Caco-2 (cell line): ENCODE measurements at regions of chr19 and their contacts with region 1.

Region 1: DNA sequence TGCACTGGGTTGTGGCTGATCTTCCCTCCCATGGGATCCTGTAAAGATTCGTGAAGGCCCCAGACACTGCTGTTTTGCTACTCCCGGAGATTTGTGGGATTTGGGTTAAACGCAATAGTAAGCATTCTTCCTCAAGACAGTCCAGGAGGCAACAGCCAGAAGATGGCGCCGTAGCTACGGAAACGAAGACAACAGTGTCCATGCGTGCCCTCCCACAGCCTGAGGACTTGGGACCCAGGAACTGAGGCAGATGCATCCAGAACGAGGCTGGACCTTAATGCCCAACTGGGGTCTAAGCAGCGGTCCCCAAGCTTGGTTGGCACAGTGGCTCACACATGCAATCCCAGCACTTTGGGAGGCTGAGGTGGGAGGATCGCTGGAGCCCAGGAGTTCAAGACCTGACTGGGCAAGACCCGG is 57.6 kb upstream of the ZNF507 start:
- DNase-seq: peak; percentile 62 to 72
- H3K4me3 ChIP-seq: no peak overlapping the region
- H3K4me3 Mint-ChIP-seq: no peak overlapping the region
- H3K27ac Mint-ChIP-seq: no peak overlapping the region
- H3K4me1 ChIP-seq: no peaks in the 10 kb centered on the region
- H3K4me1 Mint-ChIP-seq: no peaks in the 10 kb centered on the region
- H3K27me3 ChIP-seq: peaks cover 2% of the 10 kb centered on the region; the same call in 1 of the 2 replicates
- H3K27me3 Mint-ChIP-seq: peaks cover 18% of the 10 kb centered on the region
- CTCF ChIP-seq: peak; percentile 33 to 62

Region 2: GRCh38 chr19:32253683-32254508 is 33.9 kb before region 1 on chr19:
- CTCF ChIA-PET with region 1: no interaction called
- POLR2A ChIA-PET with region 1: no interaction called
- intact Hi-C with region 1: no loop called
- DNase-seq: no peak
- H3K4me3 ChIP-seq: no peak overlapping the region
- H3K4me3 Mint-ChIP-seq: no peak overlapping the region
- H3K27ac Mint-ChIP-seq: no peak overlapping the region
- H3K4me1 ChIP-seq: no peaks in the 10 kb centered on the region
- H3K4me1 Mint-ChIP-seq: no peaks in the 10 kb centered on the region
- H3K27me3 ChIP-seq: peaks cover 1% of the 10 kb centered on the region; the same call in 1 of the 2 replicates
- H3K27me3 Mint-ChIP-seq: peaks cover 19% of the 10 kb centered on the region
- CTCF ChIP-seq: no peak

Region 3: GRCh38 chr19:32324631-32325285 is 36.9 kb after region 1 on chr19:
- CTCF ChIA-PET with region 1: interaction called, 5 read pairs
- POLR2A ChIA-PET with region 1: no interaction called
- intact Hi-C with region 1: loop called (anchors 5 kb)
- DNase-seq: no peak
- H3K4me3 ChIP-seq: no peak overlapping the region
- H3K4me3 Mint-ChIP-seq: no peak overlapping the region
- H3K27ac Mint-ChIP-seq: no peak overlapping the region
- H3K4me1 ChIP-seq: no peaks in the 10 kb centered on the region
- H3K4me1 Mint-ChIP-seq: peaks cover 4% of the 10 kb centered on the region
- H3K27me3 ChIP-seq: no peaks in the 10 kb centered on the region
- H3K27me3 Mint-ChIP-seq: peaks cover 10% of the 10 kb centered on the region
- CTCF ChIP-seq: no peak

Region 4: DNA sequence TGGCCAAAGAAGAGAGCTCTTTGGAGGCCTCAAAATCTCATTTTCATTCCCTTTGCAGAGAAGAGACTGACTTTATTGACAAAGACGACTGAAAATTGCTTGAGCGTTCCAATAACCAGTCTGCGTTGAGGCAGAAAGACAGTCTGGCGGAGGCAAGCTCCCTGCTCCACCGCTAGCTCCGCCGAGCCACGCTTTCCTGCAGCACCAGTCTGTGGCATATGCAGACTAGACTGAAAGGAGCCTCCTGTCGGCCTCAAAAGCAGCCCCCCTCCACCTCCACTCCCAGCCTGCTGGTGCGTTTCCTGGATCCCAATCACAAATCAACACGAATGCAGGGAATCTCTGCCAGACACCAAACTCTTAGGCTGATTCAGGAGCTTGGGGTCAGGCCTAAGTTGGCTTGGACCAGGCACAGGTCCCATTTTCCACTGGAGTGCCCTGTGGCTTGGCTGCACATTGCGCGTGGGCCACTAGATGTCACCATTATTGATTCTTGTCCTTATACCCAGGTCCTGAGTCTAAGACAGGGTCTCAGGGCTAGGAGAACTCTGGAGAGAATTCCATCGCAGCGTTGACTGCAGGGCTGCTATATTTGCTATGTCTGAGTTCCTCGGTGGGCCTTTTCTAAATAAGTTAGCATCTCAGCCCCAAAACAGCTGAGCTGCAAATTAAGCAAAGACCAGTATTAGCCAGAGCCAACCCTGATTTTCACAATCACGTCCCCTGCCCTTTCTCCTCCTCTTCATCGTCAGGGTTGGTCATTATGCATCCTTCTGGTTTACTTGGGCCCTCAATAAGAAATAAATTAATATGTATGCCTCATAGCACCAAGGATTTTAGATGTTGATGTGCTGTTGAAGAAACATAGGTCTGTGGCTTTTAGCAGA is 52.4 kb after region 1 on chr19:
- CTCF ChIA-PET with region 1: no interaction called
- POLR2A ChIA-PET with region 1: no interaction called
- intact Hi-C with region 1: loop called (anchors 5 kb)
- DNase-seq: peak; percentile 74 to 76
- H3K4me3 ChIP-seq: no peak overlapping the region
- H3K4me3 Mint-ChIP-seq: no peak overlapping the region
- H3K27ac Mint-ChIP-seq: no peak overlapping the region
- H3K4me1 ChIP-seq: 0 out of 2 replicates have a peak, but pooled peaks cover 3% of the 10 kb centered on the region
- H3K4me1 Mint-ChIP-seq: no peaks in the 10 kb centered on the region
- H3K27me3 ChIP-seq: no peaks in the 10 kb centered on the region
- H3K27me3 Mint-ChIP-seq: no peaks in the 10 kb centered on the region
- CTCF ChIP-seq: peak; percentile 68 to 76

Region 5: DNA sequence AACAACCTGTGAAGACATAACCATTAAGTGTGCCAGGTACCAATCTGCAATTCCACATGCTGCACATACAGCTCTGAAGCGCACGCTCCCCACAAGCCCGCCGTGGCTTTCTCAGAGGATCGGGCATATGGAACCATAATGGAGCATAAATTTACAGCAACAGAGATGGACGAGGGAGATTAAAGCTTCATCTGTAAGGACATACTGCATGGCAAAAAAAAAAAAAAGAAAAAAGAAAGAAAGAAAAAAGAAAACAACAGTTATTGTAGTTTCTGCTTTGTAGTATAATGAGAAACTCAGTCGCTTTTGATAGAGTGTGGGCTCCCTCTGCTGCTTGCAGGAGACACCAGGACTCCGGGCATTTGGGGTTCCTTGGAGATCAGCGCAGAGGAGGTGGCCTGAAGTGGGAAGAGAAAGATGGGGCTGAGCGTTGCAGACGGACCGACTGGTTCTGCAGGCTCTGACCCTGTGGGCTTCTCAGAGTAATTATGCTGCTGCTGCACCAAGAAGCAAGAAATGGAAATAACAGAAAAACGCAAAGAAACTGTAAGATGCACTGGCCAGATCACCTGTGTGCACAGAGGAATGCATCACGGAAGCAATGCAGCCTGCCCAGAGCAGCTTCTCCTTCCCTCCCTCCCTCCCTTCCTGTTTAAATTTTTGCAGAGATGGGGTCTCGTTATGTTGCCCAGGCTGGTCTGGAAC is 282.4 kb after region 1 on chr19:
- CTCF ChIA-PET with region 1: interaction called, 4 read pairs
- POLR2A ChIA-PET with region 1: no interaction called
- intact Hi-C with region 1: loop called (anchors 1 kb)
- DNase-seq: peak; percentile 68 to 75
- H3K4me3 ChIP-seq: no peak overlapping the region
- H3K4me3 Mint-ChIP-seq: peak overlapping the region; percentile 36
- H3K27ac Mint-ChIP-seq: no peak overlapping the region
- H3K4me1 ChIP-seq: no peaks in the 10 kb centered on the region
- H3K4me1 Mint-ChIP-seq: no peaks in the 10 kb centered on the region
- H3K27me3 ChIP-seq: no peaks in the 10 kb centered on the region; the same call in 1 of the 2 replicates
- H3K27me3 Mint-ChIP-seq: peaks cover 3% of the 10 kb centered on the region
- CTCF ChIP-seq: peak; percentile 79 to 89

Region 6: GRCh38 chr19:32662186-32662585 is 374.4 kb after region 1 on chr19:
- CTCF ChIA-PET with region 1: no interaction called
- POLR2A ChIA-PET with region 1: no interaction called
- intact Hi-C with region 1: no loop called
- DNase-seq: no peak
- H3K4me3 ChIP-seq: no peak overlapping the region
- H3K4me3 Mint-ChIP-seq: no peak overlapping the region
- H3K27ac Mint-ChIP-seq: no peak overlapping the region
- H3K4me1 ChIP-seq: no peaks in the 10 kb centered on the region
- H3K4me1 Mint-ChIP-seq: no peaks in the 10 kb centered on the region
- H3K27me3 ChIP-seq: no peaks in the 10 kb centered on the region
- H3K27me3 Mint-ChIP-seq: no peaks in the 10 kb centered on the region
- CTCF ChIP-seq: no peak